ENCODE measurements at regions of chr2 and their contacts with region 1.

Region 1: GRCh38 chr2:198309673-198310280 is 505.4 kb downstream of the PLCL1 start:
- DNase-seq: no peak
- ATAC-seq: peak in 1 of 2 donors; percentile 44
- H3K4me3 ChIP-seq: no peak overlapping the region
- H3K27ac ChIP-seq: no peak overlapping the region
- H3K4me1 ChIP-seq: no peaks in the 10 kb centered on the region
- H3K27me3 ChIP-seq: no peaks in the 10 kb centered on the region
- CTCF ChIP-seq: peak in 4 of 5 experiments; percentile 38 to 79 (median 64)
- POLR2A ChIP-seq: no peak

Region 2: DNA sequence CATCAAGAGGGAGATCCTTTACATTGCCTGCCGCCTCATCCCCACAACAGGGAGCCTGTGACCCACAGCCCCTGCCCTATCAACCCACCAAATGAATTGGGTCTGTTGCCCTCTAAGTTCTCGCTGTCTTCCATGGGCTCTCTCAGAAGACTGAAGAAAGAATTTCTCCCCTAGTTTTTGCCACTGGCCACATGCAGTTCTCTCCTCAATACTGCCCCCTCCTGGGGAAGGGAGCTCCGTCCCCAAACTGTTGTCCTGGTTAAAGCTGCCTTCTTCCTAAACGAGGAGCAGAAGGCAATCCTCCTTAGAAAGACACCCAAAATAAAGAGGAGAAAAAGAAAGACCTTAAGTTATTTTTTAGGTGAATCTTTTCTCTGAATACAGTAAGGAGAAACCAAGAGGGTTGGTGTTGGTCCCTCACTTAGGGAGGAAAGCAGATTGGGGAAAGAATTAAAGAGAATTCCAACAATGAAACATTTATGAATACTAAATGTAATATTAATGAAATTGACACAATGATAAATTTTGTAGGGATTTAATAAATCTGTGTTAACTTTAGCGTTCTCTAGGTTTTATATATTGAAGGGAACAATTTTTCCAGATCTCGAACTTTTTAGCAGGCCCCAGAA is 1179.1 kb after region 1 on chr2:
- in situ Hi-C with region 1: loop called (anchors 10 to 25 kb)
- intact Hi-C with region 1: loop called (anchors 2 kb)
- DNase-seq: no peak
- ATAC-seq: no peak
- H3K4me3 ChIP-seq: no peak overlapping the region
- H3K27ac ChIP-seq: no peak overlapping the region
- H3K4me1 ChIP-seq: no peaks in the 10 kb centered on the region
- H3K27me3 ChIP-seq: no peaks in the 10 kb centered on the region
- CTCF ChIP-seq: peak in 3 of 5 experiments; percentile 21 to 58 (median 42)
- POLR2A ChIP-seq: no peak